Heart left ventricle (tissue), 16 donors: ENCODE measurements at regions of chr7 and their contacts with region 1.

Region 1: GRCh38 chr7:30938435-30939316 is 25.1 kb upstream of the GHRHR start:
- DNase-seq: peak; percentile 81 to 92 (median 85)
- ATAC-seq: peak; percentile 72 to 90 (median 85)
- H3K4me3 ChIP-seq: peak overlapping the region in 7 of 12 donors; percentile 7 to 39 (median 31)
- H3K27ac ChIP-seq: no peak overlapping the region
- H3K4me1 ChIP-seq: peaks cover 0 to 31% (median 12%) of the 10 kb centered on the region in 12 donors
- H3K27me3 ChIP-seq: no peaks in the 10 kb centered on the region
- CTCF ChIP-seq: peak; percentile 95 to 100 (median 98)
- POLR2A ChIP-seq: no peak

Region 2: DNA sequence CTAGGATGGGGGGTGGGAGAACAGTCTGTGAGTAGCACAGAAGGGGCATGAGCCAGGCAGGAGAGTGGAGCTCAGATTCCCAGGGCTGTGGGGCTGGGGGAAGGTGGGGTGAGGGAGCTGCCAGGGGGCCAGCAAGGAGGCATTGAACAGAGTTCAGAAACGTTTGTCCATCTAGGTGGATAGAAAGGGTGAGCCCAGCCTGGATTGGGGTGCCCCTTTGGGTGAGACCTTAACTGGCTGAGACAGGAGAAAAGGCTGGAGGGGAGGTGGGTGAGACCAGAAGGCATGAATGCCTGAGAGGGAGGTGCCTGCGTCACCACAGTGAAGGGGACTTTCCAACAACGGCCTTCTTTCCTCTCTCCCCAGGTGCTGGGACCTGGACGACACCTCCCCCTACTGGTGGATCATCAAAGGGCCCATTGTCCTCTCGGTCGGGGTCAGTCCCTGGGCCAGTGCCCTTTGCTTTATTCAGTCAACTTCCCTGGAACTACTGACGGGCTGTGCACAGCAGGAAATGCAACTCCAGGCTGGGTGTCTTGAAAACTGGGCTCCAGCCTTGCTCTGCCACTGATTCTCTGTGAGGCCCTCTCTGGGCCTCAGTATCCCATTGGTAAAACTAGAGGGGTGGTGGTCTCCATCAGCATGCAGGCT is 36.1 kb after region 1 on chr7:
- intact Hi-C with region 1: loop called in 4 of 10 experiments (anchors 1 to 5 kb)
- DNase-seq: peak in 3 of 5 donors; percentile 56 to 69 (median 60)
- ATAC-seq: peak; percentile 62 to 85 (median 78)
- H3K4me3 ChIP-seq: no peak overlapping the region
- H3K27ac ChIP-seq: no peak overlapping the region
- H3K4me1 ChIP-seq: peaks cover 0 to 19% (median 1%) of the 10 kb centered on the region in 12 donors
- H3K27me3 ChIP-seq: peaks cover 0 to 4% (median 0%) of the 10 kb centered on the region in 9 donors
- CTCF ChIP-seq: peak; percentile 68 to 85 (median 78)
- POLR2A ChIP-seq: no peak

Region 3: DNA sequence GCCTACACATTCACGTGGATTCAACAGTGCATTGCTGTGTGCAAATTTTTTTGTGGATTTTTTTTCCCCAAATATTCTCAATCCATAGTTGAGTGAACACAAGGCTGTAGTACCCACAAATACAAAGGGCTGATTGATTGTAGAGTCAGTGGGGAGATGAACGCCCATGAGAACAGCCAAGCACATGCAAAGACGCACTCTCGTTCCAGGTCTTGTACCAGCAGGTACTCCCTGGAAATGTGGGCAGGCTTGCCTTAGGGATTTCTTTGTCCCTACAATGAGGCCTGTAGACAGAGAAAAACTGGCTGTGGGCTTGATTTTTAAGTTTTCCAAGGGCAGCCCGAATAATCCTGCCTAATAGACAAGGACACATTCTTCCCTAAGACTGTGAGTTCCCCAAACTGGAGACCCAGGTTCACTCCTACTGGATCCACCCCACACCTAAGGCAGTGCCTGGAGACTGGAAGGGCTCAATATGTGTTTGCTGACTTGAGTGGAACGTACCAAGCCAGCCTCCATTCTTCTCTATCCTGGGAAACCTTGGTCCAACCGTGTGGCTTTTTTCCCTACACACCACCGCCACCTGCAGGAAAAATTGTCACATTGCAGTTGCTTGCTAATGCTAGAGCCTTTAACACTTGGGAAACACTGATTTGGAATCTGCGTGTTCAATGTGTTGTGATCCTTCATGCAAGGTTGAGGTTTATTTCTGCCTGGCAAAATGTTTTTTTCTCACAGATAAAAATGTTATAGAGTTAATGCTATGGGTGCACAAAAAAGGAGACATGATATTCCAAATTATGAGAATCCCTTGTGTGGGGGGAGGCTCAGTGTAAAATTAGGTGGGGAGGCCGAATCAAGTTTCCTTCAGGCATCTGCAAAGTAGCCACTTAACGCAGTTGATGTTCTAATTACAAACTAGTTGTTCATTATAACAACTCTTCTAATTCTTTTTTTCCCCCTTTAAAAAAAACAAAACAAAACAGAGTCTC is 797.6 kb after region 1 on chr7:
- intact Hi-C with region 1: no loop called
- DNase-seq: peak in 4 of 5 donors; percentile 30 to 55 (median 43)
- ATAC-seq: peak; percentile 23 to 83 (median 70)
- H3K4me3 ChIP-seq: no peak overlapping the region
- H3K27ac ChIP-seq: no peak overlapping the region
- H3K4me1 ChIP-seq: no peaks in the 10 kb centered on the region
- H3K27me3 ChIP-seq: no peaks in the 10 kb centered on the region
- CTCF ChIP-seq: peak; percentile 70 to 86 (median 82)
- POLR2A ChIP-seq: no peak